ENCODE measurements at regions of chr19 and their contacts with region 1.

Region 1: DNA sequence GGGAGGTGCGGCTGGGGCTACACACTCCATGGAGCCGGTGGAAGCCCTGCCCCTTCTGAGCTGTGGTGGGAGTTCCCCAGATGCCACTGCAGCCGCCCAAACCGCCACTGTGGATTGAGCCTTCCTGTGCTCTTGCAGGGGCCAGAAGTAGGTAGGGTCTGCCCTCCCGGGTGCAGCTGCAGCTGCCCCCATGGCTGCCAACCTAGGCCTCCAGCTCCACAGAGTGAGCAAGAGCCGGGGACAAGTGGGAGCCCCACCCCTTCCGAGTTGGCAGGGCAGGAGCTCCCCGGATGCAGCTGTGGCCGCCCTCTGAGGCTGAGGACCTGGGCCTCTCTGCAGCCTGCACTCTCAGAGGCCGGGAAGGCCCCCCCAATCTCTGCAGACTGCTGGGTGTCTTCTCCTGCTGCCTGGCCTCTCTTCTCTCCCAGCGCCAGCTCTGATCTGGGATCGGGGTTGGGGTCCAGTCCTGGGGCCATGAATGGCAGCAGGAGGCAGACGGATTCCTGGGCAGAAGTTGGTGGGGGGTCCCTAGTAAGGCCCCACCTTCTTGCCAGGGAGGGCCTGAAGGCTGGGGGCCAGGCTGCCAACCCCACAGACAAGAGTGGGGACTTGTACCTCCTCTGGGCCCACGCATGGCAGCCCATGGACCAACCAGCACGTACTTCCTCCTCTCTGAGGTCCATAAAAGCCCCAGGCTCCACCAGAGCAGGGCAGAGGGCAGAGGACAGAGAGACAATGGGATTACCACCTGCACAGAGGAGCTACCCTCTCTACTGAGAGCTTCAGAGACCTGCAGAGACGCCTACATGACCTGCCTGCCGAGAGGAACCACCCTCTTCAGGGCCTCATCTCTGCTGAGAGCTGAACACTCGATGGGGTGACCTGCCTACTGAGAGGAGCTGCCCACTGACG is 28.9 kb downstream of the AP2S1 start:
- DNase-seq: peak; percentile 40 to 75 (median 48)
- H3K4me3 ChIP-seq: no peak overlapping the region
- H3K4me3 Mint-ChIP-seq: peak overlapping the region in 6 of 7 donors; percentile 38 to 73 (median 52)
- H3K27ac ChIP-seq: no peak overlapping the region
- H3K27ac Mint-ChIP-seq: peak overlapping the region; percentile 76 to 90 (median 86)
- H3K4me1 ChIP-seq: peaks cover 33% of the 10 kb centered on the region
- H3K4me1 Mint-ChIP-seq: peaks cover 24 to 43% (median 33%) of the 10 kb centered on the region in 3 donors
- H3K27me3 ChIP-seq: no peaks in the 10 kb centered on the region
- H3K27me3 Mint-ChIP-seq: no peaks in the 10 kb centered on the region

Region 2: GRCh38 chr19:46542428-46543230 is 279.1 kb before region 1 on chr19:
- CTCF ChIA-PET with region 1: no interaction called
- POLR2A ChIA-PET with region 1: no interaction called
- DNase-seq: peak; percentile 50 to 84 (median 71)
- H3K4me3 ChIP-seq: no peak overlapping the region
- H3K4me3 Mint-ChIP-seq: no peak overlapping the region
- H3K27ac ChIP-seq: no peak overlapping the region
- H3K27ac Mint-ChIP-seq: no peak overlapping the region
- H3K4me1 ChIP-seq: peaks cover 3% of the 10 kb centered on the region
- H3K4me1 Mint-ChIP-seq: peaks cover 3 to 5% (median 4%) of the 10 kb centered on the region in 3 donors
- H3K27me3 ChIP-seq: no peaks in the 10 kb centered on the region
- H3K27me3 Mint-ChIP-seq: peaks cover 4 to 7% of the 10 kb centered on the region in 2 donors

Region 3: DNA sequence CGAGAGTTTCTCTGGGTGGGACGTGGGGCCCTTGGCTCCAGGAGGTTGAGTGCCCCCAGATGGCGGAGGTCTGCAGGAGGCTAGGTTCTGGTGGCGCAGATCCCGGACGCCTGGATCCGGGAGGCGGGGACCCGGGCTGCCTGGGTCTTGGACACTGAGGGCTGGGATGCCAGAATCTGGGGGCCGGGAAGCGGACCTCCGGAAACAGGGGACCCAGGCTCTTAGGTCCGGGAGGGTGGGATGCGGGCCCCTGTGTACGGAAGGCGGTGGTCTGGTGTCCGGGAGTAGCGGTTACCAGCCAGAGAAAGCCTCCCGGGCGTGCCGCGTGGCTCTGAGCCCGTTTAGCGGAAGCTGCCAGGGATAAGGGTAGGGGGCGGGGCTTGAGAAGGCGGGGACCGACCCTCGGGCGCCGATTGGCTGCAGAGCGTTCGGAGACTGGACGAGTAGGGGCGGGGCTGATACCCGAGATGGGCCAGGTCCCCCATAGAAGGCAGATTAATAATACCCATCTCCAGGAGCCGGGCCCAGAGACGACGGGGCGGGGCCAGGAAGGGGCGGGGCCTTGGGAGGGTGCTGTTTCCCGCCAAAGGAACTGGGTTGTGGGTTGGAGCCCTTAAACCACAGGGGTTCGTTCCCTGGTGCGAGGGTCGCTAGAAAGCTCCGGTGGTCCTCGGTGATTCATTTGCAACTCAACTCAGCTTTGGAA is 33.3 kb before region 1 on chr19 and contains the start of gene SLC1A5:
- CTCF ChIA-PET with region 1: interaction called, 15 read pairs
- POLR2A ChIA-PET with region 1: interaction called, 11 read pairs
- DNase-seq: peak; percentile 85 to 98 (median 97)
- H3K4me3 ChIP-seq: peak within 1 kb of the TSS; percentile 88
- H3K4me3 Mint-ChIP-seq: peak within 1 kb of the TSS; percentile 87 to 97 (median 92)
- H3K27ac ChIP-seq: peak within 1 kb of the TSS; percentile 92
- H3K27ac Mint-ChIP-seq: peak within 1 kb of the TSS; percentile 74 to 100 (median 96)
- H3K4me1 ChIP-seq: peaks cover 54% of the 10 kb centered on the region
- H3K4me1 Mint-ChIP-seq: peaks cover 53 to 62% (median 61%) of the 10 kb centered on the region in 3 donors
- H3K27me3 ChIP-seq: no peaks in the 10 kb centered on the region
- H3K27me3 Mint-ChIP-seq: no peaks in the 10 kb centered on the region
- total RNA-seq, gene SLC1A5: 377 to 380 TPM